Heart left ventricle (tissue), 16 donors: ENCODE measurements at regions of chr12 and their contacts with region 1.

Region 1: DNA sequence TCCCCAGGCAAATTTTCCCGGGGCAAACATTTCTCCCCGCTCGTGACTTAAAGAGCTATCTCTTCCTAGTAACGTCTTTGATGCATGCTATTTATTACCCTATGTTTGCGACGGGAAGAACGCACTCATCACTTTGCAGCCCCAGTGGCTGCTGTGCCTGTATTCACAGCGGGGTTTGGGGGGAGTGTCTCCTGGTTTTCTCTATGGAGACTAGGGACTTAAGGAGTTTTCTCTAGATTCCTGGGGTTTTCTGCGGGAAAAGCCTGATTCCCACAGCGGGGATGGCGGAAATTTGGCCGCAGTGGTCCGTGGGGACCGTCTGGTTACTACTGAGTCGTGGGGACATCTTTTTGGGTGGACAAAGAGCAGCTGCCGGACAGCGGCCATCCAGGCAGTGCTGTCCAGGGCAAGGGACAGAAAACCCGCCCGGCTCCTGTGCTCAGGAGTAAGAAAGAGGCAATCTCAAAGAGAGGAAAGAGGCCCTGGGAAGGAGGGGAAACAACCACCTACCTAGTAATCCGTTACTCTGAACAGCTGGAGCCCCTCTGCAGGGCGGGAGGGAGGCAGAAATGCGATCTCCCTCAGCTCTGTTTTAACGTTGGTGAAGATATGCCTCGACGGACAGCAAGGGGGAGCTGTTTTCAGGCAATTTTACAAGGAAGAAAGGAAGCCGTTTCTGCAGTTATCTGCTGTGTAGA is 771 bp upstream of the AVPR1A start:
- DNase-seq: peak; percentile 15 to 55 (median 33)
- ATAC-seq: peak; percentile 54 to 80 (median 72)
- H3K4me3 ChIP-seq: peak overlapping the region; percentile 3 to 61 (median 50)
- H3K27ac ChIP-seq: peak overlapping the region in 8 of 12 donors; percentile 8 to 67 (median 48)
- H3K4me1 ChIP-seq: peaks cover 0 to 29% (median 11%) of the 10 kb centered on the region in 12 donors
- H3K27me3 ChIP-seq: peaks cover 18 to 72% (median 46%) of the 10 kb centered on the region in 9 donors
- CTCF ChIP-seq: peak; percentile 59 to 81 (median 72)
- POLR2A ChIP-seq: no peak

Region 2: DNA sequence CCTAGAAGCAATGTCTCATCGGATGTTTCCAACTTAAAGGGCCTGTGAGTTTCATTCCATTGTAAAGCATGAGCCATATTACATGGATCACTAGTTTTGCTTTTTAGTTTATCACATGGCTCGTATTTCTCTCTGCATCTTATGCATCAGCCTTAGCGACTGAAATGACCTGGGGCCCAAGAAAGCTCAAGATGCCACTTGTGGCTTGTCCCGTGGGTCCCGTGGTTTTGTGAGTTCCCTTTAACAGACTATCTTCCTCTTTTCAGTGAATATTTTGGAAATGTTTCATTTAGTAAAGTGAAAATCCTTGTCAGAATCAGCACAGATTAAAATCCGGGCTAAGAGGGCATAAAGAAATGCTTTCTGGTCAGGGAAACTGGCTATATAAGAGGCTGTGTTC is 130.7 kb before region 1 on chr12:
- intact Hi-C with region 1: no loop called
- DNase-seq: no peak
- ATAC-seq: no peak
- H3K4me3 ChIP-seq: no peak overlapping the region
- H3K27ac ChIP-seq: no peak overlapping the region
- H3K4me1 ChIP-seq: no peaks in the 10 kb centered on the region
- H3K27me3 ChIP-seq: no peaks in the 10 kb centered on the region
- CTCF ChIP-seq: no peak
- POLR2A ChIP-seq: no peak

Region 3: GRCh38 chr12:63302269-63302940 is 150.6 kb after region 1 on chr12:
- intact Hi-C with region 1: loop called in 1 of 10 experiments (anchors 10 kb)
- DNase-seq: no peak
- ATAC-seq: no peak
- H3K4me3 ChIP-seq: no peak overlapping the region
- H3K27ac ChIP-seq: peak overlapping the region in 4 of 12 donors; percentile 12 to 25 (median 18)
- H3K4me1 ChIP-seq: peaks cover 0 to 19% (median 0%) of the 10 kb centered on the region in 12 donors
- H3K27me3 ChIP-seq: no peaks in the 10 kb centered on the region
- CTCF ChIP-seq: no peak
- POLR2A ChIP-seq: no peak

Region 4: GRCh38 chr12:63450816-63451215 is 299.0 kb after region 1 on chr12:
- intact Hi-C with region 1: loop called in 1 of 10 experiments (anchors 5 kb)
- DNase-seq: no peak
- ATAC-seq: no peak
- H3K4me3 ChIP-seq: no peak overlapping the region
- H3K27ac ChIP-seq: no peak overlapping the region
- H3K4me1 ChIP-seq: no peaks in the 10 kb centered on the region
- H3K27me3 ChIP-seq: no peaks in the 10 kb centered on the region
- CTCF ChIP-seq: peak in 7 of 12 donors; percentile 7 to 43 (median 22)
- POLR2A ChIP-seq: no peak